Activated T-helper 2 cell treated with anti-CD3 and anti-CD28 coated beads, Interferon-gamma antibody, Interleukin-2, Interleukin-4, amounts not matched to agents 10 μg/mL and 5 μg/mL and 100 μg/mL, durations not matched to agents 14 hours and 24 hours and 36 hours (primary cell): ENCODE measurements at regions of chr6 and their contacts with region 1.

Region 1: DNA sequence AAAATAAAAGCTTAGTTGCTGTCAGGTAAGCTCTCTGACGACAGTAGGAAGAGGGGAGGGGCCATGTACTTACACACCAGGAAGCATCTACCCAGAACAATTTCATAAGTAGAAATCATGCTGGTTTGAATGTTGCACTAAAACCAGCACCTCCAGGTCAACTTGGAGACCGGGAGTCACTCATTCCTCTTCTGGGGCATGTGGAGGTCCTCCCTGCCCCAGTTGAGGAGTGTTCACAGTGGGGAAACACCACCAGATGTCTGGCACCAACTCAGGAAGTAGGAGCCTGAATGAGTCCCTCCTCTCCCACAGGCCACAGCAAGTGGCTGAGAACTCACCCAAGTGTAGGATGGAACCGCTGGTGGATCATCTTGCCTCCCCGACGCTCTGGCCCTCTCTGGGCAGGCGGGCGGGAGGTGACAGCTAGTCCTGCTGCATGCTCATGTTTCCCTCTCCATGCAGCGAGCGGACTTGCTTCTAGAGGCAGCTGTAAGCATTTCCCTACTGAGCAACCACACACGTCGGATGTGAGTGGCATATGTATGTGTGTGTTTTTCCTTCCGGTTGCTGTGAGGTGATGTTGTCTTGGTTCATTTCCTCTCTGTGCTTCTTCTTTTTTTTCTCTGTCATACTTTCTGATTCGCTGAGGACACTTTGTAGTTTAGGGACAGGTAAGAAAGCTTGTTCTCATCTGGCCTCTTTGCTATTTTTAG is 149.5 kb upstream of the NEDD9 start:
- DNase-seq: peak; percentile 71
- H3K4me3 Mint-ChIP-seq: peak overlapping the region; percentile 85
- H3K27ac Mint-ChIP-seq: peak overlapping the region; percentile 92
- H3K4me1 Mint-ChIP-seq: peaks cover 59% of the 10 kb centered on the region
- H3K27me3 Mint-ChIP-seq: no peaks in the 10 kb centered on the region

Region 2: GRCh38 chr6:11353921-11354389 is 28.0 kb before region 1 on chr6:
- intact Hi-C with region 1: loop called (anchors 1 kb)
- DNase-seq: peak; percentile 44
- H3K4me3 Mint-ChIP-seq: peak overlapping the region; percentile 18
- H3K27ac Mint-ChIP-seq: peak overlapping the region; percentile 94
- H3K4me1 Mint-ChIP-seq: peaks cover 69% of the 10 kb centered on the region
- H3K27me3 Mint-ChIP-seq: no peaks in the 10 kb centered on the region

Region 3: GRCh38 chr6:11424395-11425050 is 42.6 kb after region 1 on chr6:
- intact Hi-C with region 1: loop called (anchors 2 kb)
- DNase-seq: no peak
- H3K4me3 Mint-ChIP-seq: no peak overlapping the region
- H3K27ac Mint-ChIP-seq: peak overlapping the region; percentile 43
- H3K4me1 Mint-ChIP-seq: peaks cover 53% of the 10 kb centered on the region
- H3K27me3 Mint-ChIP-seq: no peaks in the 10 kb centered on the region

Region 4: GRCh38 chr6:11700118-11700718 is 318.3 kb after region 1 on chr6:
- intact Hi-C with region 1: no loop called
- DNase-seq: no peak
- H3K4me3 Mint-ChIP-seq: no peak overlapping the region
- H3K27ac Mint-ChIP-seq: no peak overlapping the region
- H3K4me1 Mint-ChIP-seq: peaks cover 20% of the 10 kb centered on the region
- H3K27me3 Mint-ChIP-seq: no peaks in the 10 kb centered on the region

Region 5: GRCh38 chr6:12033770-12034169 is 651.8 kb after region 1 on chr6:
- intact Hi-C with region 1: no loop called
- DNase-seq: no peak
- H3K4me3 Mint-ChIP-seq: no peak overlapping the region
- H3K27ac Mint-ChIP-seq: no peak overlapping the region
- H3K4me1 Mint-ChIP-seq: peaks cover 50% of the 10 kb centered on the region
- H3K27me3 Mint-ChIP-seq: no peaks in the 10 kb centered on the region